K562 (cell line): ENCODE measurements at regions of chr19 and their contacts with region 1.

Region 1: GRCh38 chr19:8050274-8051096 is 2.1 kb upstream of the CCL25 start:
- DNase-seq: peak; percentile 97 to 100 (median 98)
- ATAC-seq: peak; percentile 98
- H3K4me3 ChIP-seq: peak overlapping the region; percentile 56
- H3K27ac ChIP-seq: peak overlapping the region; percentile 91
- H3K4me1 ChIP-seq: peaks cover 18 to 43% of the 10 kb centered on the region in 2 experiments
- H3K27me3 ChIP-seq: no peaks in the 10 kb centered on the region
- CTCF ChIP-seq: 0 out of 6 replicates have a peak, but pooled peaks of 1 of the 3 experiments have one; percentile 1
- EP300 ChIP-seq: no peak
- POLR2A ChIP-seq: peak; percentile 86
- RAD21 ChIP-seq: peak in 1 of 2 experiments; percentile 14; a peak in 1 of 4 replicates

Region 2: DNA sequence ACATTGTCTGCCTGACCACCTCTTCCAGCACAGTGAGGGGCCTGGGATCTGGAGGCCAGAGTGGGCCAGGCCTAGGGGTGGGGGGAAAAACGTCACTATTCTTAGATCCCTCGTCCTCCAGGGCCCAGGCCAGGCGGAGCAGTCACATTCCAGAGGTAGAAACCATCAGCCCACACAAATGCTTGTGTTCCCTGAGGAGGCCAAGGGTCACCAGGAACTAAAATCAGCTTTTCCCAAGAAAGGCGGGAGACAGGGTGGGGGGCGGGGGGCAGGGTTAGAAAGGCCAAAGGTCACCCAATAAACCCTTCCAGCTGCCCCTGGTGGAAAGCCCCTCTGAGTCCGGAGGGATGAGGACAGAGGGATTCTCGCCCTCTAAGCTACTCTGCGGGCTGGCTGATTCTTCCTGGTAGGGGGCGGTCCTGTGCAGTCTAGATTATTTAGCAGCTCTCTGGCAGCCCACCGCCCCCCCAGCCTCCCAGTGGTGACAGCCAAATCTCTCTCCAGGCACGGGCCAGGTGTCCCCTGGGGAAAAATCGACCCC is 21.5 kb before region 1 on chr19:
- CTCF ChIA-PET with region 1: no interaction called
- POLR2A ChIA-PET with region 1: interaction called, 6 read pairs
- in situ Hi-C with region 1: no loop called
- intact Hi-C with region 1: loop called (anchors 2 kb)
- DNase-seq: peak; percentile 29 to 47 (median 42)
- ATAC-seq: peak; percentile 24; the same call in 1 of the 3 replicates
- H3K4me3 ChIP-seq: no peak overlapping the region
- H3K27ac ChIP-seq: no peak overlapping the region
- H3K4me1 ChIP-seq: peaks cover 9 to 28% of the 10 kb centered on the region in 2 experiments
- H3K27me3 ChIP-seq: no peaks in the 10 kb centered on the region
- CTCF ChIP-seq: peak in 2 of 3 experiments; percentile 23 to 32; a peak in 3 of 6 replicates
- EP300 ChIP-seq: no peak
- POLR2A ChIP-seq: no peak
- RAD21 ChIP-seq: no peak

Region 3: GRCh38 chr19:8036434-8037099 is 13.9 kb before region 1 on chr19:
- CTCF ChIA-PET with region 1: no interaction called
- POLR2A ChIA-PET with region 1: interaction called, 10 read pairs
- in situ Hi-C with region 1: no loop called
- intact Hi-C with region 1: loop called (anchors 2 kb)
- DNase-seq: no peak
- ATAC-seq: no peak
- H3K4me3 ChIP-seq: no peak overlapping the region
- H3K27ac ChIP-seq: peak overlapping the region; percentile 45; the same call in 2 of the 3 replicates
- H3K4me1 ChIP-seq: peaks cover 28 to 37% of the 10 kb centered on the region in 2 experiments
- H3K27me3 ChIP-seq: no peaks in the 10 kb centered on the region
- CTCF ChIP-seq: no peak
- EP300 ChIP-seq: no peak
- POLR2A ChIP-seq: no peak
- RAD21 ChIP-seq: no peak